ENCODE measurements at regions of chr10 and their contacts with region 1.

Region 1: DNA sequence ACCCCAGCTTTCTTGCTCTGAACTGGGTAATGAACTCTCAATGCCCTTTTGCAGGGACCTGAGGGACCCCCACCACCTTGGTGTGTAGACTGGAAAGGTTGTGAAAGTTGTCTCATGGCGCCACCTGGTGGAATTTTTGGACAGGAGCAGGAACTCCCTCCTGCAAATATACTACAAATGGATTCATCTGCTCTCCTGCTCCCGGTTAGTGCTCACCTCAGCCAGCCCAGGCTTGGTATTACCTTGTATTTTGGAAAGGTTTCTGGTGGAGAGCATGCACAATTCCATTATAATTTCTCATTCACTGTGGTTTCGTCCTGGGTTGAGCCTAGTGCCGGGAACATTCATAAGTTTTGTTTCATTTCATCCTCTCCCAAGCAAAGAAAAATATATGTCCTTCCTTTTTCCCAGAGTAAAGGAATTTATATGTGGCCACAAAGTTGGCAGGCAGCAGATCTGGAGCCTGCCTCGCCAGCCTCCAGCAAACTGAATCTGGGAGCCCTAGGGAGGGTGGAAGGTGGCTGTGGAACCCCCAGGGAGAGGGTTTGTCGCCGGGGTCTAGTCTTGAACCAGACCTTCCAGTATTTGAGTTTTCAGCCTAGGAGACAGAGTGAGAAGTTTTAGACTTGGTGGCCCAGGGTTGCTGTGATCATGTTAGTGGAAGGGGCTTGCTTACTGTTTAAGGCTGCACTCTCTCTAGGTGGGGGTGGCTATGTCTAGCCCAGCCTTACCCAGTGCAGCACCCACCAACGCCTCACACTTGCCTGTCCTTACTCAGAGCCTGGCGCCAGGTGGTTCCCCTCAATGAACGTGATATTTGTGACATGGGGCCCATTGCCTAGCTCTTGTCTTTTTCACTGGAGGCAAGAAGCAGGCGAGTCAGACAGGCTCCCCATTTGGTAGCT is 9.5 kb downstream of the FAM241B start:
- H3K4me3 ChIP-seq: no peak overlapping the region
- H3K27ac ChIP-seq: no peak overlapping the region
- H3K4me1 ChIP-seq: no peaks in the 10 kb centered on the region
- CTCF ChIP-seq: peak; percentile 66

Region 2: GRCh38 chr10:69515699-69516259 is 123.8 kb before region 1 on chr10:
- CTCF ChIA-PET with region 1: interaction called, 284 read pairs
- POLR2A ChIA-PET with region 1: interaction called, 5 read pairs
- H3K4me3 ChIP-seq: no peak overlapping the region
- H3K27ac ChIP-seq: no peak overlapping the region
- H3K4me1 ChIP-seq: no peaks in the 10 kb centered on the region
- CTCF ChIP-seq: peak; percentile 84

Region 3: DNA sequence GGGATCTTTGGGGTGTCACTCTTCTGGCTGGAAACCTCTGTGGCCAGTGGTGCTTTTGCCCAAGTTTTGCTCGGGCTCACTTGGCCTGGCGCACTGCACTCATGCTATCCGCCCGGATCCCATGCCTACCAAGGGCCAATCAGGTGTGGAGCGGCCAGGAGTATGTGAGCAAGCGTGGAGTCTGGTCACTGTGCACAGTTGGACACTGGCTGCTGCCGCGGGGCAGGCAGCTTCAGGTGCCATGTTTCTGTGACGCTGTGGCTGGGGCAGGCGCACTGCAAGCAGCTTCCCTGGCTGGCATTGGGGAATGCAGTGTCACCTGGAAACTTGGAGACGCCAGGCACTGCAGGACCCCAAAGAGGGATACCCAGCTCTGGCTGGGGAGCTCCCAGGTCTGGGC is 111.6 kb before region 1 on chr10:
- CTCF ChIA-PET with region 1: interaction called, 21 read pairs
- POLR2A ChIA-PET with region 1: no interaction called
- H3K4me3 ChIP-seq: no peak overlapping the region
- H3K27ac ChIP-seq: no peak overlapping the region
- H3K4me1 ChIP-seq: no peaks in the 10 kb centered on the region
- CTCF ChIP-seq: no peak

Region 4: GRCh38 chr10:69659241-69660038 is 19.9 kb after region 1 on chr10:
- CTCF ChIA-PET with region 1: interaction called, 11 read pairs
- POLR2A ChIA-PET with region 1: no interaction called
- H3K4me3 ChIP-seq: no peak overlapping the region
- H3K27ac ChIP-seq: no peak overlapping the region
- H3K4me1 ChIP-seq: no peaks in the 10 kb centered on the region
- CTCF ChIP-seq: no peak